H1 (cell line): ENCODE measurements at regions of chr12 and their contacts with region 1.

Region 1: DNA sequence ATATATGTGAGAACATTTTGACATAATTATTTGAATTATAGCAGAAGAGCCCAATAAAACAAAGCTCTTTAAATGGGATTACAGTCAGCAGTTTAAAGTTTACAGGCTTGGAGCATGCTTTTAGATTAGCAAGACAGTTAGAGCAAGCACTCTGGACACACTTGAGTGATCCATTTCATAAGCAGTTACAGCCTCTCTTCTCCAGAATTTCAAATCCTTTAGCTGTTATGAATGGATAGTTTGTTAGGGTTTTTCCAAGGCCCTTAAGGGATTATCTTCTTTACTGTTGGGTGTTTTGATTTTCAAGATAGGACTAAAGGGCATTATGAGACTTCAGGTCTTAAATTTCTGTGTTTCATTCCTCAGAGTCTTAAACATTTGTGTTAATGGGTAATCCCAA is 36.3 kb downstream of the BEST3 start:
- DNase-seq: no peak
- H3K4me3 ChIP-seq: no peak overlapping the region
- H3K27ac ChIP-seq: no peak overlapping the region
- H3K4me1 ChIP-seq: no peaks in the 10 kb centered on the region
- H3K27me3 ChIP-seq: no peaks in the 10 kb centered on the region
- CTCF ChIP-seq: no peak
- EP300 ChIP-seq: no peak
- POLR2A ChIP-seq: no peak
- RAD21 ChIP-seq: no peak

Region 2: GRCh38 chr12:69563166-69563762 is 99.5 kb before region 1 on chr12:
- CTCF ChIA-PET with region 1: no interaction called
- POLR2A ChIA-PET with region 1: no interaction called
- DNase-seq: no peak
- H3K4me3 ChIP-seq: no peak overlapping the region
- H3K27ac ChIP-seq: no peak overlapping the region
- H3K4me1 ChIP-seq: no peaks in the 10 kb centered on the region
- H3K27me3 ChIP-seq: peaks cover 0 to 1% (median 0%) of the 10 kb centered on the region in 4 experiments; a peak in 1 of 7 replicates
- CTCF ChIP-seq: no peak
- EP300 ChIP-seq: no peak
- POLR2A ChIP-seq: no peak
- RAD21 ChIP-seq: no peak

Region 3: DNA sequence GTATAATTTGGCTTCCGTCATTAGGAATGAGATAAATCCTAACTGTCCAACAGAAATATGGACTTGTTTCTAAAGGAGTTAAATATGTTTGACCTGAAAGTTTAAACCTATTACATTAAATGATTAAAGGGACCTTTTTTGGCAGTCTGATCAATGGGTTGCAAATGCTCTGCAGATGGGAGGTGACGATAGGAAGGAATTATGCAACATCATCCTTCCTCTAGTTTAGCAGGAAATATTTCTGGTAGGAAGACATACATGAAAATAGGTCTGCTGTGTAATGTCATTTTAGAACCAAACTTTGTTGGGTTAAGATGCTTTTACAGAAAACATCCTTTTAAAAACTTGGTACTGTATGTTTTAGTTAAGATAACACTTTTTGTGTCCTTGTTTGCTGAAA is 54.6 kb before region 1 on chr12:
- CTCF ChIA-PET with region 1: no interaction called
- POLR2A ChIA-PET with region 1: no interaction called
- DNase-seq: no peak
- H3K4me3 ChIP-seq: no peak overlapping the region
- H3K27ac ChIP-seq: no peak overlapping the region
- H3K4me1 ChIP-seq: no peaks in the 10 kb centered on the region
- H3K27me3 ChIP-seq: no peaks in the 10 kb centered on the region
- CTCF ChIP-seq: no peak
- EP300 ChIP-seq: no peak
- POLR2A ChIP-seq: no peak
- RAD21 ChIP-seq: no peak

Region 4: GRCh38 chr12:69676257-69677012 is 13.7 kb after region 1 on chr12:
- CTCF ChIA-PET with region 1: interaction called, 28 read pairs
- POLR2A ChIA-PET with region 1: no interaction called
- DNase-seq: no peak
- H3K4me3 ChIP-seq: no peak overlapping the region
- H3K27ac ChIP-seq: no peak overlapping the region
- H3K4me1 ChIP-seq: no peaks in the 10 kb centered on the region
- H3K27me3 ChIP-seq: no peaks in the 10 kb centered on the region
- CTCF ChIP-seq: peak in 1 of 3 experiments; percentile 15; a peak in 1 of 4 replicates
- EP300 ChIP-seq: no peak
- POLR2A ChIP-seq: no peak
- RAD21 ChIP-seq: no peak; a peak in 1 of 4 replicates

Region 5: DNA sequence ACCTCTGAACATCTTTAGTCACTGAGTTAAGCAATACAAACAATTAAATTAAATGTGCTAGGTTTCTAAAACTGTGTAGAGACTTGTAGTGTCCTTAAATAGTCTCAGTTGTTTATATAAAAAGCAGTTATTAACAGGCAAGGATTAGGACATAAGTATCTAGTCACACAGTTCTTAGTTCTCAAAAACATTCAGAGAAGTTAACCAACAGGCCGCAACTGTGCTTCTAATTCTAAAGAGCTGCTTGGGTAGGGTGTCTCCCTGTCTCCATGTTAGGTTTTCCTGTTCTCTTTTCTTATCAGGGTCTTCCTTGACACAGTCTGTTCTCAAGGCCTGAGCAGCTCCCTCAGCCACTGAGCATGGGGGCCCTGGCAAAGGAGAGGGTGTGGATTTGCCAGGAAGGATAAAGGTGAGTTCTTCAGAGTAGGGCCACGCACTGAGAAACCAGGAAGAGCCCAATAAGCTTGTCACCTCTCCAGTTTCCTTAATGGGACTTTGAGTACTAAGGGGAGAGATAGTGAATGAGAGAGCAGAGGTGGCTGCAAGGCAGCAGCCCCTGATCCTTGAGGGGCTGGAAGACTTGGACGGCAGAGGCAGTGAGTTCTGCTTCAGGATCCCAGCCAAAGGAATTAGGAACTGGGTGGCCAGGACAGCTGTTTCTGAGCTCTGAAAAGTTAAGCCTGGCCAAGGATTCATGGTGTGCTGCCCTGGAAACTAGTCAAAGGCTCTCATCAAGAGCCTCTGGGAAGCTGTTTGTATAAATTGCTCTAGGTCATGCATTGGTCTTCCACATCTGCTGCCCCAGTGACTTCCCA is 339.5 kb after region 1 on chr12:
- CTCF ChIA-PET with region 1: no interaction called
- POLR2A ChIA-PET with region 1: no interaction called
- DNase-seq: no peak
- H3K4me3 ChIP-seq: no peak overlapping the region
- H3K27ac ChIP-seq: peak overlapping the region; percentile 28; the same call in 1 of the 2 replicates
- H3K4me1 ChIP-seq: no peaks in the 10 kb centered on the region; a peak in 1 of 7 replicates
- H3K27me3 ChIP-seq: no peaks in the 10 kb centered on the region
- CTCF ChIP-seq: no peak
- EP300 ChIP-seq: no peak
- POLR2A ChIP-seq: no peak
- RAD21 ChIP-seq: no peak